Sigmoid colon (tissue), 7 donors: ENCODE measurements at regions of chr6 and their contacts with region 1.

Region 1: GRCh38 chr6:27772261-27773001 is 139.8 kb downstream of the OR2B2 start:
- DNase-seq: peak; percentile 91
- H3K4me3 ChIP-seq: no peak overlapping the region
- H3K27ac ChIP-seq: no peak overlapping the region
- H3K4me1 ChIP-seq: peaks cover 0 to 5% (median 4%) of the 10 kb centered on the region in 4 donors
- H3K27me3 ChIP-seq: peaks cover 0 to 50% (median 22%) of the 10 kb centered on the region in 3 donors
- CTCF ChIP-seq: peak; percentile 73 to 91 (median 89)
- EP300 ChIP-seq: no peak
- POLR2A ChIP-seq: no peak

Region 2: GRCh38 chr6:27188885-27189418 is 583.5 kb before region 1 on chr6:
- intact Hi-C with region 1: loop called (anchors 1 kb)
- DNase-seq: peak; percentile 79
- H3K4me3 ChIP-seq: peak overlapping the region; percentile 34 to 62 (median 58)
- H3K27ac ChIP-seq: peak overlapping the region; percentile 75 to 86 (median 79)
- H3K4me1 ChIP-seq: peaks cover 0 to 6% (median 2%) of the 10 kb centered on the region in 4 donors
- H3K27me3 ChIP-seq: no peaks in the 10 kb centered on the region
- CTCF ChIP-seq: peak; percentile 25 to 70 (median 55)
- EP300 ChIP-seq: no peak
- POLR2A ChIP-seq: no peak

Region 3: GRCh38 chr6:27795697-27796494 is 23.5 kb after region 1 on chr6:
- intact Hi-C with region 1: loop called (anchors 2 kb)
- DNase-seq: no peak
- H3K4me3 ChIP-seq: no peak overlapping the region
- H3K27ac ChIP-seq: no peak overlapping the region
- H3K4me1 ChIP-seq: peaks cover 0 to 18% (median 12%) of the 10 kb centered on the region in 4 donors
- H3K27me3 ChIP-seq: peaks cover 0 to 15% (median 5%) of the 10 kb centered on the region in 3 donors
- CTCF ChIP-seq: peak; percentile 37 to 83 (median 77)
- EP300 ChIP-seq: no peak
- POLR2A ChIP-seq: no peak

Region 4: GRCh38 chr6:27825025-27825793 is 52.8 kb after region 1 on chr6:
- intact Hi-C with region 1: no loop called
- DNase-seq: no peak
- H3K4me3 ChIP-seq: peak overlapping the region; percentile 39 to 52 (median 42)
- H3K27ac ChIP-seq: peak overlapping the region; percentile 53 to 84 (median 74)
- H3K4me1 ChIP-seq: no peaks in the 10 kb centered on the region
- H3K27me3 ChIP-seq: peaks cover 12 to 54% (median 36%) of the 10 kb centered on the region in 3 donors
- CTCF ChIP-seq: no peak
- EP300 ChIP-seq: no peak
- POLR2A ChIP-seq: no peak

Region 5: GRCh38 chr6:27893059-27893835 is 120.8 kb after region 1 on chr6:
- intact Hi-C with region 1: loop called (anchors 1 kb)
- DNase-seq: peak; percentile 81
- H3K4me3 ChIP-seq: peak overlapping the region; percentile 48 to 71 (median 59)
- H3K27ac ChIP-seq: peak overlapping the region in 3 of 4 donors; percentile 33 to 92 (median 59)
- H3K4me1 ChIP-seq: peaks cover 0 to 25% (median 24%) of the 10 kb centered on the region in 4 donors
- H3K27me3 ChIP-seq: peaks cover 22 to 56% (median 47%) of the 10 kb centered on the region in 3 donors
- CTCF ChIP-seq: no peak
- EP300 ChIP-seq: no peak
- POLR2A ChIP-seq: peak in 1 of 2 donors; percentile 84

Region 6: DNA sequence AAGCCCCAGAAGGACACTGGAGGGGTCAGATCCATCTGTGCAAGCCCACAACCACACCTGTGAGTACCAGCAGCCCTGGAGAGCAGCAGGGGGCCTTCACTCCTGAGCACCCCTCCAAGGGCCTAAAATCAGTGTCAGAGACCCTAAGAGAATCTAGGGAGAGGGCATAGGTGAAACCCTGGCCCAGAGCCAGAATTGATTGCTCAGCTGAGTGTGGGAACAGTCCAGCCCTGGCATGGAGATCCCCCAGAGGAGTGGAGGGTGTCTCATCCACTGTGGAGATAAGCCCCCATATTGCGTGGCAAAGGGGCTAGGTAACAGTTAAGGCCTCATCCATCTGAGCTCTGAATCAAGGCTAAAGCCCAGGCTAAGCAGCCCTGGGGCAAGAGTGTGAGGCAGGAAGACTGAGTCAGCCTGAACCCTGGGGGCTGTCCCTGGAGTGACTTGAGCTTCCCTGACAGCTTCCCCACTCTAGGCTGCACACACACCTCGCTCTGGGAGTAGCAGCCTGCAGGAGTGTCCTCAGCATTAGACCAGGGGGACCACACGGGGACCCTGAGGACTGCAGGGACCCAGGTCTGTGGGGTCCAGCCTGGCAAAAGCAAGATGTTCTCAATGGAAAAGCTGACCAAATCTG is 1759.1 kb after region 1 on chr6:
- intact Hi-C with region 1: no loop called
- DNase-seq: no peak
- H3K4me3 ChIP-seq: no peak overlapping the region
- H3K27ac ChIP-seq: no peak overlapping the region
- H3K4me1 ChIP-seq: no peaks in the 10 kb centered on the region
- H3K27me3 ChIP-seq: no peaks in the 10 kb centered on the region
- CTCF ChIP-seq: no peak
- EP300 ChIP-seq: no peak
- POLR2A ChIP-seq: no peak